Adrenal gland (tissue), 19 donors: ENCODE measurements at regions of chr17 and their contacts with region 1.

Region 1: GRCh38 chr17:61966191-61966590 is 38.4 kb upstream of the INTS2 start:
- DNase-seq: no peak
- H3K4me3 ChIP-seq: no peak overlapping the region
- H3K27ac ChIP-seq: no peak overlapping the region
- H3K4me1 ChIP-seq: no peaks in the 10 kb centered on the region
- H3K27me3 ChIP-seq: no peaks in the 10 kb centered on the region
- CTCF ChIP-seq: no peak
- POLR2A ChIP-seq: no peak

Region 2: DNA sequence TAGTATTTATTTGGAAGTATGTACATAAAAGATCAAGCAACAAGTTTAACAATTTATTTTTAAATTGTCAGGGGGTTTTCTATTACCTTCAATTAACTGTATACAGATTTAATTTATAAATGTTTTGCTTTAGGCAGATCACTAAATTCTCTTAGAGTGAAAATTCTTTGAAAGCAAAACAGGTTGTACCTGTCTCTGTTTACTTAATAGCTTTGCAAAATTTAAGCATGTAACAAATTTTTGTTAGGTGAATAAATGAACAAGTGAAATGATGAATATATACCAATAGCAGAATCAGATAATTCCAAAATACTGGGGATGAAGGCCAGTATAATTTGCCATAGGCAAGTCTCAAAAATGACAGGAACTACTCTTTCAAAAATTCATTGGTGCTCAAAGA is 189.6 kb before region 1 on chr17:
- intact Hi-C with region 1: no loop called
- DNase-seq: no peak
- H3K4me3 ChIP-seq: no peak overlapping the region
- H3K27ac ChIP-seq: no peak overlapping the region
- H3K4me1 ChIP-seq: no peaks in the 10 kb centered on the region
- H3K27me3 ChIP-seq: no peaks in the 10 kb centered on the region
- CTCF ChIP-seq: no peak
- POLR2A ChIP-seq: no peak

Region 3: GRCh38 chr17:61862975-61863800 is 103.0 kb before region 1 on chr17 and contains the start of gene BRIP1:
- intact Hi-C with region 1: no loop called
- DNase-seq: peak; percentile 91 to 96 (median 95)
- H3K4me3 ChIP-seq: peak within 1 kb of the TSS in 3 of 4 donors; percentile 49 to 77 (median 72)
- H3K27ac ChIP-seq: peak within 1 kb of the TSS; percentile 58 to 87 (median 74)
- H3K4me1 ChIP-seq: peaks cover 5 to 14% of the 10 kb centered on the region in 2 donors
- H3K27me3 ChIP-seq: no peaks in the 10 kb centered on the region
- CTCF ChIP-seq: no peak
- POLR2A ChIP-seq: peak in 1 of 2 donors; percentile 64
- total RNA-seq, gene BRIP1: 0.06 to 6.9 (median 0.47) TPM

Region 4: GRCh38 chr17:62030209-62030608 is 64.0 kb after region 1 on chr17:
- intact Hi-C with region 1: loop called in 1 of 2 experiments (anchors 10 kb)
- DNase-seq: peak in 6 of 7 donors; percentile 23 to 52 (median 30)
- H3K4me3 ChIP-seq: no peak overlapping the region
- H3K27ac ChIP-seq: peak overlapping the region in 2 of 5 donors; percentile 10 to 27
- H3K4me1 ChIP-seq: peaks cover 11 to 15% of the 10 kb centered on the region in 2 donors
- H3K27me3 ChIP-seq: no peaks in the 10 kb centered on the region
- CTCF ChIP-seq: no peak
- POLR2A ChIP-seq: no peak